Astrocyte of the cerebellum (primary cell): ENCODE measurements at regions of chr13 and their contacts with region 1.

Region 1: GRCh38 chr13:20424949-20425348 is 100.7 kb downstream of the CRYL1 start:
- DNase-seq: peak; percentile 99
- H3K4me3 ChIP-seq: no peak overlapping the region
- CTCF ChIP-seq: no peak

Region 2: DNA sequence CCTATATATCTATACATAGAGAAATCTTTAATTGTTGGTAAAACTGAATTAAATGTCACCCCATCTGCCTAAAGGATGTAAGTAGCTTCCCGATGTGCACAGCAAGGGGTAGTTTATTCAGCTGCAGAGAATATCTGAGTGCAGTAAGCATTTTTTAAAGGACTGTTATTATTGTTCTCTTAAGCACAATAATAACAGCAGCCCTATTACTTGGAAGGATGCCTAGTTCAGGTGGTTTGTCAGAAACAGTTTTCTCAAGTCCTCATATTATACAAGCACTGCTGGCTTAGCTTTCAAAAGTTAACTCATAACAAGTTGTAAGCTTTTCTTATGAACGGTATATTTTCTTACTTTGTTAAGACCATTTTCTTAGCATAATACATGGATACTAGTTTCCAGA is 41.9 kb before region 1 on chr13:
- in situ Hi-C with region 1: loop called (anchors 5 kb)
- DNase-seq: no peak
- H3K4me3 ChIP-seq: no peak overlapping the region
- CTCF ChIP-seq: no peak